ENCODE measurements at regions of chr12 and their contacts with region 1.

Region 1: GRCh38 chr12:118183705-118184104 is 47.8 kb downstream of the PEBP1 start:
- DNase-seq: no peak
- H3K4me3 ChIP-seq: no peak overlapping the region
- H3K27ac ChIP-seq: no peak overlapping the region
- H3K4me1 ChIP-seq: peaks cover 13 to 28% of the 10 kb centered on the region in 2 donors
- H3K27me3 ChIP-seq: no peaks in the 10 kb centered on the region
- CTCF ChIP-seq: no peak
- POLR2A ChIP-seq: no peak

Region 2: GRCh38 chr12:118372541-118373495 is 189.1 kb after region 1 on chr12 and contains the start of gene TAOK3:
- intact Hi-C with region 1: loop called in 1 of 2 experiments (anchors 5 kb)
- DNase-seq: peak; percentile 97 to 100 (median 99)
- H3K4me3 ChIP-seq: peak within 1 kb of the TSS; percentile 43 to 97 (median 87)
- H3K27ac ChIP-seq: peak within 1 kb of the TSS; percentile 8 to 89 (median 78)
- H3K4me1 ChIP-seq: peaks cover 0 to 37% of the 10 kb centered on the region in 2 donors
- H3K27me3 ChIP-seq: no peaks in the 10 kb centered on the region
- CTCF ChIP-seq: peak in 1 of 6 experiments; percentile 4
- POLR2A ChIP-seq: peak; percentile 70 to 92
- total RNA-seq, gene TAOK3: 24.0 to 39.7 (median 29.9) TPM